HEK293 (cell line): ENCODE measurements at regions of chr2 and their contacts with region 1.

Region 1: GRCh38 chr2:69724540-69725159 is 17.3 kb upstream of the ANXA4 start:
- H3K4me3 ChIP-seq: peak overlapping the region; percentile 15
- H3K27ac ChIP-seq: no peak overlapping the region
- H3K4me1 ChIP-seq: no peaks in the 10 kb centered on the region
- CTCF ChIP-seq: peak; percentile 90

Region 2: GRCh38 chr2:69741619-69742466 is 17.2 kb after region 1 on chr2 and contains the start of gene ANXA4:
- CTCF ChIA-PET with region 1: interaction called, 18 read pairs
- POLR2A ChIA-PET with region 1: interaction called, 13 read pairs
- H3K4me3 ChIP-seq: peak within 1 kb of the TSS; percentile 70
- H3K27ac ChIP-seq: peak within 1 kb of the TSS; percentile 85
- H3K4me1 ChIP-seq: peaks cover 9% of the 10 kb centered on the region
- CTCF ChIP-seq: 0 out of 2 replicates have a peak, but pooled peaks have one; percentile 32

Region 3: GRCh38 chr2:69767034-69767433 is 42.4 kb after region 1 on chr2:
- CTCF ChIA-PET with region 1: interaction called, 20 read pairs
- POLR2A ChIA-PET with region 1: no interaction called
- H3K4me3 ChIP-seq: no peak overlapping the region
- H3K27ac ChIP-seq: no peak overlapping the region
- H3K4me1 ChIP-seq: peaks cover 7% of the 10 kb centered on the region
- CTCF ChIP-seq: no peak

Region 4: DNA sequence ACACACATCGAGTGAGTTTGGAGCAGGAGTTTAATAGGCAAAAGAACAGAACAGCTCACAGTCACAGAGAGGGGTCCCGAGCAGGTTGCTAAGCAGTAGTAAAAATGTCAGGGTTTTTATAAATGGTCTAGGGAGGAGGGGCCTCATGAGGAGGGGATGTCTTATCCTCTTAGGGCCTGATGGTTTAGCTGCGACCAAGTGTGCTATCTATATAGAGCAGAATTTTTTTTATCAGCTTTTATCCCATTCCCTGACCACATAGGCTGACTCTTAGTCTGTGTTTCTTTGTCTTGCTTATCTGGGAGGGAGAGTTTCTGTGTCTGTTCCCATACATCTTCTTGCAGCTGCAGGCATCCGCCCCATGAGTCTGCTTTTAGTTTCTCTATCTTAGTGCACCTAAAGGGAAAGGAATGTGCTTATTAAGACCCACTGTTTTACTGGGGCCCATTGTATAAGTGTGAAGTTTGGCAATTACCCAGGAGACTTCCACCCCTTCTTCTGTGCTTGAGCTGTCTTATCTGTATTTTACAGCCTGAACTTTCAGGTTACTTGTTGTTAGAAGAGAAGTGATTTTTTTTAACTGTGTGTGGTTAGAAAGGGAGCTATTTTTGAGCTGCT is 74.4 kb after region 1 on chr2:
- CTCF ChIA-PET with region 1: interaction called, 25 read pairs
- POLR2A ChIA-PET with region 1: no interaction called
- H3K4me3 ChIP-seq: peak overlapping the region; percentile 21
- H3K27ac ChIP-seq: peak overlapping the region; percentile 29; the same call in 1 of the 2 replicates
- H3K4me1 ChIP-seq: peaks cover 12% of the 10 kb centered on the region
- CTCF ChIP-seq: no peak

Region 5: DNA sequence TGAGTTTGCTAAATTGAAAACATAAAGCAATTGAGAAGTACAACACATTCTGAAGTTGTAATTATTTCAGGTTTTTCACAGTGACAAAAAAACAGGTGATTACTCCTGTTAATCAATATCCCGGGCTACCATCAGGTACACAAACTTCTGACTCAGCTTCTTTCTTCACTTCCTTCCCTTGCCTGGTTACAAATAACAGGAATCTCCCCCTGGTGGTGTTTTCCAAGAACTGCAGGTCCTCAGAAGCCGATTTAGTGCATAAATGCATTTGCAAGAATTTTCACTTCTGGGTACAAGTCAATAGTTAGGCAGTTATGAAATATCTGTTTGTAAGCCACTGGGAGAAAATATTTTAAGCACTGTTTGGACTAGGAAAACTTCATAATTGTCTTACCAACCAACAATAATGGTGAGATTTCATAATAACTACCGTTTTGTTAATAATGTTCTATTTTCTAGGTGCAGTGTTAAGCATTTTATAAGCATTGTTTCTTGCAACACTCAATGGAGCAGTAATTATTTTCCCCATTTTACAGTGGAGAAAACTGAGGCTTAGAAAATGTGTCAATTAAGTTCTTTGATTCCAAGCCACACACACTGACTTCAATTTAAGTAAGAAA is 92.4 kb after region 1 on chr2:
- CTCF ChIA-PET with region 1: interaction called, 215 read pairs
- POLR2A ChIA-PET with region 1: interaction called, 4 read pairs
- H3K4me3 ChIP-seq: no peak overlapping the region
- H3K27ac ChIP-seq: no peak overlapping the region
- H3K4me1 ChIP-seq: peaks cover 7% of the 10 kb centered on the region
- CTCF ChIP-seq: 0 out of 2 replicates have a peak, but pooled peaks have one; percentile 44

Region 6: DNA sequence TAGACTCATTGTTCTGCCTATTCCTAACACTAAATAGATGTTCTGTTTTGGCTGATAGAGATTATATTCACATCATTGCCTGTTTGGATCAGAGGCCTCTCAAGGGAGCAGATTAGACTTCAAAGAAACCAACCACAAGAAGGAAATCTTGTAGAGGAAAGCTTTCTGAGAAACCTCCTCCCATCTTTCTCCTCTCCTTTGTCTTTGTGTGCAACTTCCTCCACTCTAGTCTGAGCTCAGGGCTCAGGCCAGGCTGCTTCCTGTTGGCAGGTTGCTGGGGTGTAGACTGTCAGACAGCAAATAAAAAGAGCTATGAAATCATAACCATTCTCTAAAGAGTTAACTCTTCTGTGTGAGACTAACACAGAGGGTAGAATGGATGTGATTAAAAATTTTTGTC is 716.0 kb after region 1 on chr2:
- CTCF ChIA-PET with region 1: no interaction called
- POLR2A ChIA-PET with region 1: no interaction called
- H3K4me3 ChIP-seq: no peak overlapping the region
- H3K27ac ChIP-seq: no peak overlapping the region
- H3K4me1 ChIP-seq: no peaks in the 10 kb centered on the region
- CTCF ChIP-seq: no peak